Activated CD4-positive, alpha-beta T cell treated with anti-CD3 and anti-CD28 coated beads for 36 hours (primary cell): ENCODE measurements at regions of chr2 and their contacts with region 1.

Region 1: GRCh38 chr2:64330281-64331113 is 123.5 kb upstream of the LGALSL start:
- DNase-seq: peak; percentile 87
- ATAC-seq: no peak
- H3K4me3 Mint-ChIP-seq: peak overlapping the region; percentile 8
- H3K27ac Mint-ChIP-seq: no peak overlapping the region
- H3K4me1 Mint-ChIP-seq: peaks cover 48% of the 10 kb centered on the region
- H3K27me3 Mint-ChIP-seq: no peaks in the 10 kb centered on the region

Region 2: GRCh38 chr2:64036034-64036705 is 294.3 kb before region 1 on chr2:
- CTCF ChIA-PET with region 1: interaction called, 16 read pairs
- POLR2A ChIA-PET with region 1: interaction called, 12 read pairs
- intact Hi-C with region 1: loop called (anchors 1 kb)
- DNase-seq: peak; percentile 24
- ATAC-seq: peak; percentile 88
- H3K4me3 Mint-ChIP-seq: peak overlapping the region; percentile 40
- H3K27ac Mint-ChIP-seq: peak overlapping the region; percentile 64
- H3K4me1 Mint-ChIP-seq: peaks cover 55% of the 10 kb centered on the region
- H3K27me3 Mint-ChIP-seq: peaks cover 2% of the 10 kb centered on the region

Region 3: DNA sequence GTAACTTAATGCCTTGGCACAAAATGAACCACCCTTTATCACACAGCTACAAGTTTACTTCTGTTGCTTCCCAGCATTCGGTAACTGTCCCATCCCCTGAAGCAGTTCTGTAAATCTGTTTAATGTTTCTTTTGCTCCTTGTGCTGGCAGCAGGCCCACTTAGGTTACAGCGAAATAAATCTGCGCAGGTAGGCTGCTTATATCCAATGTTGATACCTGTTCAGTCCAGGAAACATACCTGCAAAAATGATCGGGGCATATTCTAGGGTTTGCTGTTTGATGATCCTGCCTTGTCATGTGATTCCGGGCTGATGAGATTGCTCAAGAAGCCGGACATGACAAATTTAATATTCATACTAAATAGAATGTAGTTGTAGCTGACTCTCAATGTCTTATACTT is 209.6 kb before region 1 on chr2:
- CTCF ChIA-PET with region 1: interaction called, 10 read pairs
- POLR2A ChIA-PET with region 1: no interaction called
- intact Hi-C with region 1: no loop called
- DNase-seq: no peak
- ATAC-seq: no peak
- H3K4me3 Mint-ChIP-seq: no peak overlapping the region
- H3K27ac Mint-ChIP-seq: no peak overlapping the region
- H3K4me1 Mint-ChIP-seq: peaks cover 58% of the 10 kb centered on the region
- H3K27me3 Mint-ChIP-seq: no peaks in the 10 kb centered on the region

Region 4: DNA sequence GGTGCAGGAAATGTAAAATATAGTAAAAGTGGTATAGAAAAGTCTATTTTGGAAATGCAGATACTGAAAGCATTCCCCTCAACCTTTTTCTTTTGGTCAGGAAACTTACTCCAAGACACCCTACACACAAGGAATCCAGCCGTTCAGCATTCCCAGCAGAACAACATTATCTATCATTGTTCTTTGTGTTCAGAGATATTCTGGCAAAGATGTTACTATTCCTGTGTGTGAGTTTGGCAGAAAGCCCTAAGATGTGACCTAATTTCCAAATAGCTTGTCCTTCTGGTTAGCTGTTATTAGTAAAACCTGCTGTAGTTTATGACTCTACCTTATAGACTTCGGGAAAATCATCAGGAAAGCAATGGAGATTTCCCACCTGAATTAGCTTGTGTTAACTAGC is 108.1 kb before region 1 on chr2:
- CTCF ChIA-PET with region 1: interaction called, 19 read pairs
- POLR2A ChIA-PET with region 1: interaction called, 5 read pairs
- intact Hi-C with region 1: loop called in 1 of 2 experiments (anchors 5 kb)
- DNase-seq: no peak
- ATAC-seq: no peak
- H3K4me3 Mint-ChIP-seq: no peak overlapping the region
- H3K27ac Mint-ChIP-seq: peak overlapping the region; percentile 84
- H3K4me1 Mint-ChIP-seq: peaks cover 50% of the 10 kb centered on the region
- H3K27me3 Mint-ChIP-seq: no peaks in the 10 kb centered on the region

Region 5: GRCh38 chr2:64488050-64488974 is 157.8 kb after region 1 on chr2:
- CTCF ChIA-PET with region 1: interaction called, 191 read pairs
- POLR2A ChIA-PET with region 1: interaction called, 3 read pairs
- intact Hi-C with region 1: loop called (anchors 1 kb)
- DNase-seq: peak; percentile 89
- ATAC-seq: peak; percentile 87
- H3K4me3 Mint-ChIP-seq: no peak overlapping the region
- H3K27ac Mint-ChIP-seq: no peak overlapping the region
- H3K4me1 Mint-ChIP-seq: peaks cover 8% of the 10 kb centered on the region
- H3K27me3 Mint-ChIP-seq: no peaks in the 10 kb centered on the region

Region 6: GRCh38 chr2:64698668-64699444 is 368.4 kb after region 1 on chr2:
- CTCF ChIA-PET with region 1: interaction called, 3 read pairs
- POLR2A ChIA-PET with region 1: no interaction called
- intact Hi-C with region 1: loop called in 1 of 2 experiments (anchors 2 kb)
- DNase-seq: no peak
- ATAC-seq: peak; percentile 89
- H3K4me3 Mint-ChIP-seq: no peak overlapping the region
- H3K27ac Mint-ChIP-seq: peak overlapping the region; percentile 70
- H3K4me1 Mint-ChIP-seq: peaks cover 54% of the 10 kb centered on the region
- H3K27me3 Mint-ChIP-seq: no peaks in the 10 kb centered on the region

Region 7: DNA sequence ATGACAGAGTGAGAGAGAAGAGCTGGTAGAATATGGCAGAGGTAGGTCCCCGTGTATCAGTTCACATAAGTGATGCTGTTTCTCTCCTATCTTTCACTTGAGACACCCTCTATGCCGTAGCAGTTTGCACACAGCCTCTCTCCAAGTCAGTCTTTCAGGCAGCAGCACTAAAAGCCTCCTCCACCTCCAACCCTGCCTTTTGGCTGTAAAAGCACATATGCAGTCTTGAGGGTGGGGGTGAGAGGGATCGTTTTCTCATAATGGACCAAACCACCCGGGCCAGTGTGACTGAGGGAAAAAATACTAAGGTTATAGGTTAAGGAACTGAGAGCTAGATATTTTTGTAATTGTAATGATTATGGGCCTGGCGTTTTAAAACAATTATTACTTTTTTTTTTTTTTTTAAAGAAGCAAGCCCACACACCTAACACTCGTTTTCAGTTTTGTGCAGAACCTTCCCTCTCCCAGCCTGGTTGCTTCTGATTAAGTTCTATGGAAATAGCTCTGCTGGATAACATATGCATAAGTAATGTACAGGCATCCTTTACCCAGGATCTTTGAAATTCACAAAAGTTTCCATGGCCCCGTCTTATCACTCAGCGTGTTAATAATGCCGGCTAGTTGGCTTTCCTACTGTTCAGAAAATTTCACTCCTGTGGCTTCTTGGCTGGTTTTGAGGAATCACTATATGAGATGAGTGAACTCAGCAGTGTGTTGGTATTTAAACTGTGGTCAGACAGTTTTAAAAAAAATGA is 1992.2 kb after region 1 on chr2:
- CTCF ChIA-PET with region 1: no interaction called
- POLR2A ChIA-PET with region 1: no interaction called
- intact Hi-C with region 1: no loop called
- DNase-seq: no peak
- ATAC-seq: no peak
- H3K4me3 Mint-ChIP-seq: no peak overlapping the region
- H3K27ac Mint-ChIP-seq: no peak overlapping the region
- H3K4me1 Mint-ChIP-seq: no peaks in the 10 kb centered on the region
- H3K27me3 Mint-ChIP-seq: no peaks in the 10 kb centered on the region